ENCODE measurements at regions of chr15 and their contacts with region 1.

Region 1: DNA sequence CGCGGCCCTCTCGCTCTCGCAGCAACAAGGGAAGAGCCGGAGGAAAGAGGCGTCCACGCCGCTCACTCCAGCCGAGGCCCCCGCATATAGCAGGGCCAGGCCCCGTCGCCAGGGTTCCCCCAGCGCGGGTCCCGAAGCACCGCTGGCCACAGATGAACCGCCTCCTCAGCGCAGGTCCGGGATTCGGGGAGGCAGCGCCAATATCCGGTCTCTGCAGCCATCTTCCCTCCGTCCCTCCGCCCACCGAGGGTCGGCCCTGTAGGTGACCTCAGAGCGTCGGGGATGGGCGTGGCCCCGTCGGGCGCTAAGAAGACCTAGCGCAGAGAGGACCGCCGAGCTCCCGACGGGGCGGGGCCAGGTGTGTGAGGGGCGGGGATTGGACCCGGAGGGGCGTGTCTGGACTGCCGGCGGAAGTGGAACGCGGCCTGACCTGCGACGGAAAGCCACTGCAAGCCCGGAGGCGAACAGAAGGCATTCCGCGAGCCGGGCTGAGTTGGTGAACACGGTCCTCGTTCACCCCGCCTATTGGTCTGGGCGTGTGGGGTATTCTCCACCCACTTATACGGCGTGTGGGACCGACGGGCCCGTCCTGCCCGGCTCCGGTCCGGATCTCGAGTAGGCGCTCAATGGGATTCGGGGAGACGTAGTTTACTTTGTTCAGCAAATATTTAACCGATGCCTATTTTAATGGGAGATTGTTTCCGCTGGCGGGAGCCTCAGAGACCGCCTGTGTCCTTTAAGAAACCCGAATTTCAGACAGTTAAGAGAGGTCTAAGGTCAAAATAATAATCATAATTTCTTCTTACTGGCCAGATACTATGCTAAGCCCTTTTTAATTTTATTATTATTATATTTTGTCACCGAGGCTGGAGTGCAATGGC is 26.9 kb upstream of the MTHFS start:
- DNase-seq: peak; percentile 97 to 99
- H3K4me3 ChIP-seq: peak overlapping the region; percentile 94
- H3K4me3 Mint-ChIP-seq: peak overlapping the region; percentile 83
- H3K27ac Mint-ChIP-seq: peak overlapping the region; percentile 91
- H3K4me1 ChIP-seq: 0 out of 2 replicates have a peak, but pooled peaks cover 6% of the 10 kb centered on the region
- H3K4me1 Mint-ChIP-seq: no peaks in the 10 kb centered on the region
- H3K27me3 ChIP-seq: no peaks in the 10 kb centered on the region
- H3K27me3 Mint-ChIP-seq: no peaks in the 10 kb centered on the region
- CTCF ChIP-seq: no peak

Region 2: DNA sequence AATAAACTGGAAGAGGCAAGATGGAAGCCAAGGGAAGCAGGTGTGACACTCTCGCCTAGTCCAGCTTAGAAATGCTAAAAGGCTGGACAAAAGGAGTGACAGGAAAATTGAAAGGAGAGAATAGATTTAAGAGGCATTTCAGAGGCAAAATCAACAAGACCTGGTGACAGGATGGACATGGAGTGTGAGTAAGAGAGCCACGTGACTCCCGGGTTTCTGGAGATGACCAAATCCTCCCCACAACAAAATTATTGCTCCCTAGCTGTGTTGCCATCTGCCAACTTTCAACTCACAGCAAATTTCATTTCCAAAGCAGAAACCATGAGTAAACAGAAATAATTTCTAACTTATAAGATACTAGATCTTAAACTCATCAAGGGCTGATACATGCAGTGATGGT is 79.5 kb before region 1 on chr15:
- CTCF ChIA-PET with region 1: no interaction called
- POLR2A ChIA-PET with region 1: no interaction called
- intact Hi-C with region 1: no loop called
- DNase-seq: no peak
- H3K4me3 ChIP-seq: no peak overlapping the region
- H3K4me3 Mint-ChIP-seq: no peak overlapping the region
- H3K27ac Mint-ChIP-seq: no peak overlapping the region
- H3K4me1 ChIP-seq: no peaks in the 10 kb centered on the region
- H3K4me1 Mint-ChIP-seq: peaks cover 6% of the 10 kb centered on the region
- H3K27me3 ChIP-seq: no peaks in the 10 kb centered on the region
- H3K27me3 Mint-ChIP-seq: no peaks in the 10 kb centered on the region
- CTCF ChIP-seq: no peak

Region 3: GRCh38 chr15:79896637-79897379 is 26.9 kb before region 1 on chr15 and contains the start of gene MTHFS:
- CTCF ChIA-PET with region 1: no interaction called
- POLR2A ChIA-PET with region 1: interaction called, 3 read pairs
- intact Hi-C with region 1: loop called (anchors 1 kb)
- DNase-seq: peak; percentile 85 to 89
- H3K4me3 ChIP-seq: peak within 1 kb of the TSS; percentile 87
- H3K4me3 Mint-ChIP-seq: peak within 1 kb of the TSS; percentile 85
- H3K27ac Mint-ChIP-seq: peak within 1 kb of the TSS; percentile 94
- H3K4me1 ChIP-seq: no peaks in the 10 kb centered on the region
- H3K4me1 Mint-ChIP-seq: peaks cover 12% of the 10 kb centered on the region
- H3K27me3 ChIP-seq: no peaks in the 10 kb centered on the region
- H3K27me3 Mint-ChIP-seq: no peaks in the 10 kb centered on the region
- CTCF ChIP-seq: peak in 1 of 2 experiments; percentile 59
- total RNA-seq, gene MTHFS: 45.1 and 48.2 TPM in 2 replicates

Region 4: GRCh38 chr15:80152180-80152845 is 228.6 kb after region 1 on chr15:
- CTCF ChIA-PET with region 1: no interaction called
- POLR2A ChIA-PET with region 1: no interaction called
- intact Hi-C with region 1: loop called (anchors 10 kb)
- DNase-seq: peak; percentile 90 to 98
- H3K4me3 ChIP-seq: peak overlapping the region; percentile 87
- H3K4me3 Mint-ChIP-seq: peak overlapping the region; percentile 84
- H3K27ac Mint-ChIP-seq: no peak overlapping the region
- H3K4me1 ChIP-seq: peaks cover 9% of the 10 kb centered on the region; the same call in 1 of the 2 replicates
- H3K4me1 Mint-ChIP-seq: peaks cover 7% of the 10 kb centered on the region
- H3K27me3 ChIP-seq: no peaks in the 10 kb centered on the region
- H3K27me3 Mint-ChIP-seq: peaks cover 3% of the 10 kb centered on the region
- CTCF ChIP-seq: no peak

Region 5: GRCh38 chr15:80436511-80437307 is 513.0 kb after region 1 on chr15:
- CTCF ChIA-PET with region 1: no interaction called
- POLR2A ChIA-PET with region 1: no interaction called
- intact Hi-C with region 1: no loop called
- DNase-seq: no peak
- H3K4me3 ChIP-seq: no peak overlapping the region
- H3K4me3 Mint-ChIP-seq: no peak overlapping the region
- H3K27ac Mint-ChIP-seq: no peak overlapping the region
- H3K4me1 ChIP-seq: no peaks in the 10 kb centered on the region
- H3K4me1 Mint-ChIP-seq: no peaks in the 10 kb centered on the region
- H3K27me3 ChIP-seq: no peaks in the 10 kb centered on the region
- H3K27me3 Mint-ChIP-seq: peaks cover 7% of the 10 kb centered on the region
- CTCF ChIP-seq: no peak

Measured in Caco-2 (cell line).